ENCODE measurements at regions of chr18 and their contacts with region 1.

Region 1: GRCh38 chr18:5841518-5841917 is 53.8 kb downstream of the TMEM200C start:
- DNase-seq: no peak
- ATAC-seq: no peak
- H3K4me3 ChIP-seq: no peak overlapping the region
- H3K27ac ChIP-seq: no peak overlapping the region
- H3K4me1 ChIP-seq: no peaks in the 10 kb centered on the region
- H3K27me3 ChIP-seq: peaks cover 3% of the 10 kb centered on the region; the same call in 1 of the 2 replicates
- CTCF ChIP-seq: no peak
- POLR2A ChIP-seq: no peak
- RAD21 ChIP-seq: no peak

Region 2: GRCh38 chr18:5073026-5073944 is 768.2 kb before region 1 on chr18:
- CTCF ChIA-PET with region 1: no interaction called
- POLR2A ChIA-PET with region 1: no interaction called
- dilution Hi-C with region 1: no loop called
- in situ Hi-C with region 1: no loop called
- intact Hi-C with region 1: loop called (anchors 2 kb)
- DNase-seq: peak; percentile 15
- ATAC-seq: 0 out of 2 replicates have a peak, but pooled peaks have one; percentile 44
- H3K4me3 ChIP-seq: no peak overlapping the region
- H3K27ac ChIP-seq: no peak overlapping the region
- H3K4me1 ChIP-seq: no peaks in the 10 kb centered on the region
- H3K27me3 ChIP-seq: no peaks in the 10 kb centered on the region
- CTCF ChIP-seq: peak; percentile 36
- POLR2A ChIP-seq: no peak
- RAD21 ChIP-seq: peak; percentile 51

Region 3: GRCh38 chr18:5424903-5425664 is 416.4 kb before region 1 on chr18:
- CTCF ChIA-PET with region 1: no interaction called
- POLR2A ChIA-PET with region 1: no interaction called
- dilution Hi-C with region 1: no loop called
- in situ Hi-C with region 1: no loop called
- intact Hi-C with region 1: loop called (anchors 10 kb)
- DNase-seq: peak; percentile 65
- ATAC-seq: peak; percentile 72; the same call in 1 of the 2 replicates
- H3K4me3 ChIP-seq: no peak overlapping the region
- H3K27ac ChIP-seq: no peak overlapping the region
- H3K4me1 ChIP-seq: no peaks in the 10 kb centered on the region
- H3K27me3 ChIP-seq: no peaks in the 10 kb centered on the region
- CTCF ChIP-seq: peak; percentile 52
- POLR2A ChIP-seq: no peak
- RAD21 ChIP-seq: peak; percentile 49

Region 4: GRCh38 chr18:5600378-5601071 is 241.0 kb before region 1 on chr18:
- CTCF ChIA-PET with region 1: no interaction called
- POLR2A ChIA-PET with region 1: no interaction called
- dilution Hi-C with region 1: no loop called
- in situ Hi-C with region 1: loop called (anchors 10 kb)
- intact Hi-C with region 1: loop called (anchors 1 kb)
- DNase-seq: peak; percentile 28
- ATAC-seq: peak; percentile 56
- H3K4me3 ChIP-seq: no peak overlapping the region
- H3K27ac ChIP-seq: no peak overlapping the region
- H3K4me1 ChIP-seq: no peaks in the 10 kb centered on the region
- H3K27me3 ChIP-seq: no peaks in the 10 kb centered on the region
- CTCF ChIP-seq: peak; percentile 65
- POLR2A ChIP-seq: no peak
- RAD21 ChIP-seq: peak; percentile 63

Region 5: DNA sequence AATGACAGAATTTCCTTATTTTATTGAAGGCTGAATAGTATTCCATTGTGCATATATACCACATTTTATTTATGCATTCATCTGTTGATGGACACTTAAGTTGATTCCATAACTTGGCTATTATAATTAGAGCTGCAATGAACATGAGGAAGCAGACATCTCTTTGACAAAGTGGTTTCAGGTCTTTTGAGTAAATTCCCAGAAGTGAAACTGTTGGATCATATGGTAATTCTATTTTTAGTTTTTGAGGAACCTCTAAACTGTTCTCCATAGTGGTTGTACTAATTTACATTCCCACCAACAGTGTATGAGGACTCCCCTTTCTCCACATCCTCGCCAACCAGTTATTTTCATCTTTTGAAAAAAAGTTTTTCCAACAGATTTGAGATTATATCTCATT is 23.7 kb before region 1 on chr18:
- CTCF ChIA-PET with region 1: no interaction called
- POLR2A ChIA-PET with region 1: no interaction called
- dilution Hi-C with region 1: no loop called
- in situ Hi-C with region 1: no loop called
- intact Hi-C with region 1: loop called (anchors 2 kb)
- DNase-seq: no peak
- ATAC-seq: no peak
- H3K4me3 ChIP-seq: no peak overlapping the region
- H3K27ac ChIP-seq: no peak overlapping the region
- H3K4me1 ChIP-seq: no peaks in the 10 kb centered on the region
- H3K27me3 ChIP-seq: no peaks in the 10 kb centered on the region
- CTCF ChIP-seq: no peak
- POLR2A ChIP-seq: no peak
- RAD21 ChIP-seq: no peak

Region 6: DNA sequence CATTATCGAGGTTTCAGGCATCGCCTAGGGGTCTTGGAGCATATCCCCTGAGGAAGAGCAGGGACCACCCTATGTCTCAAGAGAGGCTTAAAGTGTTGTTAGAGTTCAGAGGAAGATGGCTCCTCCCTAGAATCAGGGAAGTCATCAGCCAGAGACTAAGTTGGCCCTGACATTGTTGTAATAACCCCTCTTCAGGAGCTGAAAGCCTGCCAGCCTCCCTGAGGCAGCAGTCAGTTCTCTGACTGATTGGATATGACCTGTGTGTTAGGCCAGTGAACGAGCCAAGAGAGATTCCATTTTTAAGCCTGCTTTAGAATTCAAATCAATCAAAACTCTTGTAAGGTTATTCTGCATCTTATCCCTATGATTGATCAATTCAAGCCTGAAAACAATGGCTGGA is 922.9 kb after region 1 on chr18:
- CTCF ChIA-PET with region 1: no interaction called
- POLR2A ChIA-PET with region 1: no interaction called
- dilution Hi-C with region 1: no loop called
- in situ Hi-C with region 1: no loop called
- intact Hi-C with region 1: no loop called
- DNase-seq: no peak
- ATAC-seq: no peak
- H3K4me3 ChIP-seq: no peak overlapping the region
- H3K27ac ChIP-seq: no peak overlapping the region
- H3K4me1 ChIP-seq: peaks cover 3% of the 10 kb centered on the region; the same call in 1 of the 2 replicates
- H3K27me3 ChIP-seq: no peaks in the 10 kb centered on the region
- CTCF ChIP-seq: no peak
- POLR2A ChIP-seq: no peak
- RAD21 ChIP-seq: no peak